Activated CD8-positive, alpha-beta T cell treated with anti-CD3 and anti-CD28 coated beads for 36 hours (primary cell): ENCODE measurements at regions of chr4 and their contacts with region 1.

Region 1: GRCh38 chr4:6709230-6710114 is at the start of gene MRFAP1L1:
- DNase-seq: peak; percentile 99
- ATAC-seq: peak; percentile 86
- H3K4me3 Mint-ChIP-seq: peak within 1 kb of the TSS; percentile 99
- H3K27ac Mint-ChIP-seq: peak within 1 kb of the TSS; percentile 98
- H3K4me1 Mint-ChIP-seq: peaks cover 52% of the 10 kb centered on the region
- H3K27me3 Mint-ChIP-seq: no peaks in the 10 kb centered on the region
- CTCF ChIP-seq: no peak
- total RNA-seq, gene MRFAP1L1: 36.7 to 39.2 TPM

Region 2: GRCh38 chr4:6688879-6689505 is 20.5 kb before region 1 on chr4:
- CTCF ChIA-PET with region 1: interaction called, 7 read pairs
- POLR2A ChIA-PET with region 1: interaction called, 14 read pairs
- intact Hi-C with region 1: no loop called
- DNase-seq: peak; percentile 96
- ATAC-seq: peak; percentile 85
- H3K4me3 Mint-ChIP-seq: peak overlapping the region; percentile 74
- H3K27ac Mint-ChIP-seq: peak overlapping the region; percentile 93
- H3K4me1 Mint-ChIP-seq: peaks cover 70% of the 10 kb centered on the region
- H3K27me3 Mint-ChIP-seq: no peaks in the 10 kb centered on the region
- CTCF ChIP-seq: no peak

Region 3: GRCh38 chr4:6695660-6696630 is 13.5 kb before region 1 on chr4:
- CTCF ChIA-PET with region 1: interaction called, 10 read pairs
- POLR2A ChIA-PET with region 1: interaction called, 14 read pairs
- intact Hi-C with region 1: no loop called
- DNase-seq: peak; percentile 61
- ATAC-seq: peak; percentile 66
- H3K4me3 Mint-ChIP-seq: peak overlapping the region; percentile 38
- H3K27ac Mint-ChIP-seq: peak overlapping the region; percentile 92
- H3K4me1 Mint-ChIP-seq: peaks cover 74% of the 10 kb centered on the region
- H3K27me3 Mint-ChIP-seq: no peaks in the 10 kb centered on the region
- CTCF ChIP-seq: no peak